Thyroid gland (tissue), 4 donors: ENCODE measurements at regions of chr15 and their contacts with region 1.

Region 1: GRCh38 chr15:34056936-34057335 is 17.9 kb upstream of the AVEN start:
- DNase-seq: no peak
- H3K4me3 ChIP-seq: no peak overlapping the region
- H3K27ac ChIP-seq: no peak overlapping the region
- H3K4me1 ChIP-seq: no peaks in the 10 kb centered on the region
- H3K27me3 ChIP-seq: no peaks in the 10 kb centered on the region
- CTCF ChIP-seq: no peak
- POLR2A ChIP-seq: no peak

Region 2: GRCh38 chr15:34109797-34110663 is 53.1 kb after region 1 on chr15:
- intact Hi-C with region 1: no loop called
- DNase-seq: no peak
- H3K4me3 ChIP-seq: no peak overlapping the region
- H3K27ac ChIP-seq: no peak overlapping the region
- H3K4me1 ChIP-seq: no peaks in the 10 kb centered on the region
- H3K27me3 ChIP-seq: peaks cover 3% of the 10 kb centered on the region
- CTCF ChIP-seq: peak in 4 of 6 experiments; percentile 14 to 44 (median 24)
- POLR2A ChIP-seq: no peak

Region 3: DNA sequence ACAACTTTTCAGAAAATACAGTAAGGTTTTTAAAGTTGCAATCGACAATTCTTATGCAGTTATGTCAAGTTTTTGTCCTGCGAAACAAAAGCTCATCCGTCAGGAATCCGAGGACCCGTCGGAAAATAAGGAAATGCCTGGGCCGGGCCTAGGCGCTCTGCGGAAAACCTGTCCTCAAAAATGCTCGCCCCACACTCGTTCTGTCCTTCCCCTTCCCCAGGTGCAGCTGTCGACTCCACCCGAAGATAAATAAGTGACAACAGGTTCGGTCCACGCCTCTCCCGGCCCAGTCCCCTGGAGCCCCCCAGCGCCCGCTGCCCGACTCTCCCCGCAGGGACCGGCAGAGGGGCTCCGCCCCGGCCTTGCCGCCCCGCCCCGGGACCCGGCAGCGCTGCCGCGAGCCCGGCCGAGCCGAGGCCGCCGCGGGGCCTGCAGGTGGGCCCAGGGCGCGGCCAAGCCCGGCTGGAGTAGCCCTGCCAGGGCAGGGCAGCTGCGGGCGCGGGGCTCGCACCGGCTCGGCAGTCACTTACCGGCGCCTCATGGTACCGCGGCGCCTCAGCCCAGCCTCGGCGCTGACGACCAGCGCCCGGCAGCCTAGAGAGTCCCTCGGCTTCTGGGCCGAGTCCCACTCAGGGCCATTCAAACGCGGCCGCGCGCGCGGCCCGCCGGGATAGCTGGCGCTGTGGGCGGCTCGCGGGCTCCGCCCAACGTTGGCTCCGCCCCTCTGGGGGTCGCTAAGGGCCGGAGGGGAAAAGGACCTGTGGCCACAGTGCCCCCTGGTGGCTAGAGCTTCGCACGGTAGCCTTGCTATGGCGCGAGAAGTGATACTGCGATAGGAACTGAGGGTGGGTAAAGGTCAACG is 152.7 kb after region 1 on chr15 and contains the start of gene KATNBL1:
- intact Hi-C with region 1: loop called (anchors 2 kb)
- DNase-seq: peak; percentile 96 to 98
- H3K4me3 ChIP-seq: peak within 1 kb of the TSS in 2 of 3 donors; percentile 44 to 78
- H3K27ac ChIP-seq: peak within 1 kb of the TSS; percentile 66 to 81 (median 75)
- H3K4me1 ChIP-seq: peaks cover 8 to 9% of the 10 kb centered on the region in 2 donors
- H3K27me3 ChIP-seq: no peaks in the 10 kb centered on the region
- CTCF ChIP-seq: peak; percentile 85 to 96 (median 92)
- POLR2A ChIP-seq: peak in 1 of 2 donors; percentile 96
- total RNA-seq, gene KATNBL1: 39.8 to 66.6 (median 50.5) TPM